ENCODE measurements at regions of chr16 and their contacts with region 1.

Region 1: GRCh38 chr16:2841471-2842331 is 11.6 kb downstream of the ZG16B start:
- DNase-seq: no peak
- ATAC-seq: no peak
- H3K4me3 ChIP-seq: peak overlapping the region in 2 of 4 donors; percentile 13 to 23
- H3K27ac ChIP-seq: no peak overlapping the region
- H3K4me1 ChIP-seq: peaks cover 0 to 5% (median 0%) of the 10 kb centered on the region in 3 donors
- H3K27me3 ChIP-seq: no peaks in the 10 kb centered on the region
- CTCF ChIP-seq: no peak

Region 2: DNA sequence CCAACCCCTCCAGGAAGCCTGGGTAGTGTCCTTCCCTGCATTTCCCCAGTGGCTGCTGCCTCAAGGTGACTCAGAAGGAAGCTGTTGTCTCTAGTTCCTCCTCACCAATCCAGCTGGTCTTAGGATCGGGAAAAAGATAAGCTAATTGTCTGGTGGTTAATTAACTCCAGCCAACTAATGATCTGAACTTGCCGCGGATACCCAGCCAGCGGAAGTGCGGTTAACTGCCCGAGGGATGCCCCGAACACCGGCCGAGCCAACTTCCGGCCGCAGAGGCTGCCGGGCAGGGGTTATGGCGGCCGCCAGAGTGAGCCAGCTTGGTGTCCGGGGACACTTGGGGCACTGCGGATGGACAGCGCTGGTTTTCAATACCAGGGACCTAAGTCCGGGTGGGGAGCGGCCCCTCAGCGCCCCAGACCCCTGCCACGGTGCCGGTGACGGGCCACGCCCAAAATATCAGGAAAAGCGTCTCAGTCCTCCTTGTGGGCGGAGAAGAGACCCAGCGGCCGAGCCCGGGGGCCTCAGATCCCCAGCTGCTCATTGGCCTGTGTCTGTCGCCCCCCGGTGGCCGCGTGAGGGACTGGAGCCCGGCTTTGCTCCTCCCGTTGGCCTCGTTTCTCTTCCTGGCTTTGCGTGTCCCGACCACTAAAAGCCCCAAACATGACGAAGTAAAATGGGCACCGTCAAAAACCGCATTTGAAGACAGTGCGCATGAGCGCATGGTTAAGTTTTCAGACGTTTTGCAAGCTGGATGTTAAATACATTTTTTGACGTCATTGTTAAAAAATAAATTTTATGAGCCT is 26.5 kb after region 1 on chr16:
- intact Hi-C with region 1: loop called in 1 of 3 experiments (anchors 2 kb)
- DNase-seq: peak; percentile 89 to 98 (median 94)
- ATAC-seq: peak; percentile 98 to 99 (median 98)
- H3K4me3 ChIP-seq: peak overlapping the region; percentile 40 to 63 (median 48)
- H3K27ac ChIP-seq: peak overlapping the region; percentile 84 to 92 (median 90)
- H3K4me1 ChIP-seq: no peaks in the 10 kb centered on the region
- H3K27me3 ChIP-seq: peaks cover 0 to 5% (median 0%) of the 10 kb centered on the region in 4 donors
- CTCF ChIP-seq: peak; percentile 96 to 99 (median 98)